B cell (primary cell): ENCODE measurements at regions of chr17 and their contacts with region 1.

Region 1: GRCh38 chr17:56960596-56961538 is at the start of gene COIL:
- DNase-seq: peak; percentile 95
- ATAC-seq: peak; percentile 100
- H3K4me3 ChIP-seq: peak within 1 kb of the TSS in 4 of 5 experiments; percentile 78 to 89 (median 83)
- H3K4me3 Mint-ChIP-seq: peak within 1 kb of the TSS; percentile 91
- H3K27ac ChIP-seq: peak within 1 kb of the TSS; percentile 86 to 90
- H3K27ac Mint-ChIP-seq: peak within 1 kb of the TSS; percentile 85
- H3K4me1 ChIP-seq: peaks cover 11 to 13% of the 10 kb centered on the region in 2 donors
- H3K4me1 Mint-ChIP-seq: peaks cover 21% of the 10 kb centered on the region
- H3K27me3 ChIP-seq: no peaks in the 10 kb centered on the region
- H3K27me3 Mint-ChIP-seq: no peaks in the 10 kb centered on the region
- CTCF ChIP-seq: peak; percentile 98
- total RNA-seq, gene COIL: 19.8 and 22.9 TPM in 2 replicates

Region 2: DNA sequence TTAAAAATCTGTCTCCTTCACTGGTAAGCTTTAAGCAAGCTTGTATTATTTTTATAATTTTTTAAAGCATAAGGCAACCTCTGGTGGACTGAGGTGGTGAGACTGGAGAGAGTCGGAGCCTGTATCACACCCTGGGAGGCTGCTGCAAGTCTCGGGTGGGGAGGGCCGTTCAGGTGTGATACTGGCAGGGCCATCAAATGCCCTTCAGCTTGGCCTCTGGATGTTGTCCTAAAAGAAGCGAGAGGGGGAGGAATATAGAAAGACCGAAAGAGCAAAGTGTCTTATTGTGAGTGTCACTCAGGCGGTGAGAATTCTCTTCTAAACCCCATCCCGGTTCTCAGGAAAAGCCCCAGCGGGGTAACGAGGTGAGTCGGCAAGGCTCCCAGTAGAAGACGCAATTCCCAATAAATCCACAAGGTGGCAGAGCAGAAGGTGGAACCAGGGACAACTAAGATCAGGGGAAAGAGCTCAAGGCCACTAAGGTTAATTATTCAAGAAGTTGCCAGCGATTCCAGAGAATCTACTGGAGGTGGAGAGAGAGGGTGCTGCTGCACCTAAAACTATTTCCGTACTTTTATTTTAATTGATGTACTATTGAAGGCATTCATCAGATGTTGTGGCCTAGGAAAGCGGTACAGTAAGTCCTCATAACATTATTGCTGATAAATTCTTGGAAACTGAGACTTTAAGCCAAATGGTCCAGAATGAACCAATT is 141.3 kb before region 1 on chr17:
- CTCF ChIA-PET with region 1: interaction called, 13 read pairs
- POLR2A ChIA-PET with region 1: no interaction called
- intact Hi-C with region 1: no loop called
- DNase-seq: peak; percentile 83
- ATAC-seq: peak; percentile 89
- H3K4me3 ChIP-seq: no peak overlapping the region
- H3K4me3 Mint-ChIP-seq: no peak overlapping the region
- H3K27ac ChIP-seq: no peak overlapping the region
- H3K27ac Mint-ChIP-seq: peak overlapping the region; percentile 50
- H3K4me1 ChIP-seq: peaks cover 3 to 6% of the 10 kb centered on the region in 2 donors
- H3K4me1 Mint-ChIP-seq: peaks cover 4% of the 10 kb centered on the region
- H3K27me3 ChIP-seq: no peaks in the 10 kb centered on the region
- H3K27me3 Mint-ChIP-seq: no peaks in the 10 kb centered on the region
- CTCF ChIP-seq: peak; percentile 87

Region 3: DNA sequence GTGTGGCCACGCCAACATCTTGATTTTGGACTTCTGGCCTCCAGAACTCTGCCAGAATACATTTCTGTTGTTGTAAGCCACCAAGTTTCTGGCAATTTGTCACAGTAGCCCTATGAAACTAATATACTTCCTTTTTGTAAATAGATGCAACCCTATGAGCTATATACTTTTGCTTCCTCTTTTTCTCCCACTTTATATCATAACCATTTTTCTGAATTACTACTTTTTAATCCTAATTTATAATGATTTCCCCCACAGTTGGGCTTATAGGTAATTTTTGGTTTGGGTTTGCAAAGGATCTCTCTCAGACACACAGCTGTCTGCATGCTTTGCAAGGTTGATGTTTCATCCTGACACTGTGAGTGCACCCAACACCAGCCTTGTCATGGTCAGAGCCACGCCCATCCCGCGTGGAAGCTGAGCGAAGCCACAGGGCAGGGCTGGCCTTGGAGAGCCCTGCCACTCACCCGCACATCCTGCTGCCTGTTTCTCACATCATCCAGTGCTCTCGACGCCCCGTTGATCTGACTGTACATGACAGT is 52.8 kb before region 1 on chr17:
- CTCF ChIA-PET with region 1: no interaction called
- POLR2A ChIA-PET with region 1: no interaction called
- intact Hi-C with region 1: loop called (anchors 1 kb)
- DNase-seq: peak; percentile 79
- ATAC-seq: peak; percentile 96
- H3K4me3 ChIP-seq: peak overlapping the region in 1 of 5 experiments; percentile 22
- H3K4me3 Mint-ChIP-seq: peak overlapping the region; percentile 80
- H3K27ac ChIP-seq: peak overlapping the region; percentile 68 to 76
- H3K27ac Mint-ChIP-seq: peak overlapping the region; percentile 94
- H3K4me1 ChIP-seq: peaks cover 54 to 64% of the 10 kb centered on the region in 2 donors
- H3K4me1 Mint-ChIP-seq: peaks cover 68% of the 10 kb centered on the region
- H3K27me3 ChIP-seq: no peaks in the 10 kb centered on the region
- H3K27me3 Mint-ChIP-seq: no peaks in the 10 kb centered on the region
- CTCF ChIP-seq: no peak

Region 4: DNA sequence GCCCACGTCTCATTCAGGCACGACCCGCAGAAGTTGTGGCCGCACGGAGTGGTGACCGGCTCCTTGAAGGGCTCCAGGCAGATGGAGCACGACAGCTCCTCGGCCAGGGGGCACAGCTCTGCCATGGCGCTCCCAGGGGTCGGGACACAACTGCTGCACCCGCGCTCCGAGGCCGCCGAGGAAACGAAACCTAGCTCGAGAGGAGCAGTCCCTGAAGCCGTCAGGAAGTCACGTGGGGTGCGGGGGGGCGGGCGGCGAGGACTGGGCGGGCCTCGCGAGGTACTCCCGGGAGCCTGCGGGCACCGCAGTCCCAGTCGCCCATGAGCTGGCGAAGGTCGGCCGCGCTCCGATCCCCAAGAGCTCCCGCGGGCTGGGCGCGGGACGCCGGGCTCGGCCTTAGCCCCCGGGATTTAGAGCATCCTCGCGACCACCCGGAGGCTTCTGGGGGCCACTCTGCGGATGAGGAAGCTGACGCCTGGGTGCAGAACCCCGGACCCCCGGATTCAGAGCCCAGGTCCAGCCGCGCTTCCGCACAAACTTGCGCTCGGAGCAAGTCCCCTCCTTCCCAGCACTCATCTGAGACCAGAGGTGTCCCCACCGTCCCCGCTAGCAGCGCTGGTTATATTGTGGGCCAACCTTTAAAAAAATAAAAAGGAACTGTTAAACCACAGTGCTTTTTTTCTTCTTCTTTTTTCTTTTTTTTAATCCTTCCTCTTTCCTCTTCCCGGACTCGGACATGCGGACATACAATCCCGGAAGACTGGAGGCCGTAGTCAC is 46.8 kb before region 1 on chr17 and contains the start of gene TRIM25:
- CTCF ChIA-PET with region 1: no interaction called
- POLR2A ChIA-PET with region 1: no interaction called
- intact Hi-C with region 1: loop called (anchors 1 kb)
- DNase-seq: peak; percentile 93
- ATAC-seq: peak; percentile 88
- H3K4me3 ChIP-seq: peak within 1 kb of the TSS; percentile 83 to 93 (median 86)
- H3K4me3 Mint-ChIP-seq: peak within 1 kb of the TSS; percentile 98
- H3K27ac ChIP-seq: peak within 1 kb of the TSS; percentile 71 to 84
- H3K27ac Mint-ChIP-seq: peak within 1 kb of the TSS; percentile 94
- H3K4me1 ChIP-seq: peaks cover 47 to 54% of the 10 kb centered on the region in 2 donors
- H3K4me1 Mint-ChIP-seq: peaks cover 59% of the 10 kb centered on the region
- H3K27me3 ChIP-seq: no peaks in the 10 kb centered on the region
- H3K27me3 Mint-ChIP-seq: no peaks in the 10 kb centered on the region
- CTCF ChIP-seq: no peak
- total RNA-seq, gene TRIM25: 87.4 and 92.4 TPM in 2 replicates

Region 5: GRCh38 chr17:56977673-56978395 is 17.0 kb after region 1 on chr17 and contains the start of gene SCPEP1:
- CTCF ChIA-PET with region 1: interaction called, 11 read pairs
- POLR2A ChIA-PET with region 1: no interaction called
- intact Hi-C with region 1: loop called (anchors 1 kb)
- DNase-seq: peak; percentile 83
- ATAC-seq: peak; percentile 98
- H3K4me3 ChIP-seq: peak within 1 kb of the TSS; percentile 65 to 87 (median 74)
- H3K4me3 Mint-ChIP-seq: peak within 1 kb of the TSS; percentile 96
- H3K27ac ChIP-seq: peak within 1 kb of the TSS; percentile 44 to 76
- H3K27ac Mint-ChIP-seq: peak within 1 kb of the TSS; percentile 95
- H3K4me1 ChIP-seq: peaks cover 13 to 24% of the 10 kb centered on the region in 2 donors
- H3K4me1 Mint-ChIP-seq: peaks cover 34% of the 10 kb centered on the region
- H3K27me3 ChIP-seq: no peaks in the 10 kb centered on the region
- H3K27me3 Mint-ChIP-seq: no peaks in the 10 kb centered on the region
- CTCF ChIP-seq: no peak
- total RNA-seq, gene SCPEP1: 66.6 and 66.9 TPM in 2 replicates

Region 6: GRCh38 chr17:57084802-57085447 is 124.1 kb after region 1 on chr17 and contains the start of gene AKAP1:
- CTCF ChIA-PET with region 1: no interaction called
- POLR2A ChIA-PET with region 1: interaction called, 6 read pairs
- intact Hi-C with region 1: loop called (anchors 5 kb)
- DNase-seq: peak; percentile 97
- ATAC-seq: peak; percentile 85
- H3K4me3 ChIP-seq: peak within 1 kb of the TSS; percentile 71 to 95 (median 85)
- H3K4me3 Mint-ChIP-seq: peak within 1 kb of the TSS; percentile 95
- H3K27ac ChIP-seq: peak within 1 kb of the TSS; percentile 77 to 86
- H3K27ac Mint-ChIP-seq: peak within 1 kb of the TSS; percentile 91
- H3K4me1 ChIP-seq: peaks cover 14 to 16% of the 10 kb centered on the region in 2 donors
- H3K4me1 Mint-ChIP-seq: peaks cover 20% of the 10 kb centered on the region
- H3K27me3 ChIP-seq: peaks cover 0 to 3% (median 0%) of the 10 kb centered on the region in 4 experiments
- H3K27me3 Mint-ChIP-seq: no peaks in the 10 kb centered on the region
- CTCF ChIP-seq: no peak
- total RNA-seq, gene AKAP1: 20.1 and 27.1 TPM in 2 replicates